Activated CD4-positive, alpha-beta T cell treated with anti-CD3 and anti-CD28 coated beads for 36 hours (primary cell): ENCODE measurements at regions of chr14 and their contacts with region 1.

Region 1: DNA sequence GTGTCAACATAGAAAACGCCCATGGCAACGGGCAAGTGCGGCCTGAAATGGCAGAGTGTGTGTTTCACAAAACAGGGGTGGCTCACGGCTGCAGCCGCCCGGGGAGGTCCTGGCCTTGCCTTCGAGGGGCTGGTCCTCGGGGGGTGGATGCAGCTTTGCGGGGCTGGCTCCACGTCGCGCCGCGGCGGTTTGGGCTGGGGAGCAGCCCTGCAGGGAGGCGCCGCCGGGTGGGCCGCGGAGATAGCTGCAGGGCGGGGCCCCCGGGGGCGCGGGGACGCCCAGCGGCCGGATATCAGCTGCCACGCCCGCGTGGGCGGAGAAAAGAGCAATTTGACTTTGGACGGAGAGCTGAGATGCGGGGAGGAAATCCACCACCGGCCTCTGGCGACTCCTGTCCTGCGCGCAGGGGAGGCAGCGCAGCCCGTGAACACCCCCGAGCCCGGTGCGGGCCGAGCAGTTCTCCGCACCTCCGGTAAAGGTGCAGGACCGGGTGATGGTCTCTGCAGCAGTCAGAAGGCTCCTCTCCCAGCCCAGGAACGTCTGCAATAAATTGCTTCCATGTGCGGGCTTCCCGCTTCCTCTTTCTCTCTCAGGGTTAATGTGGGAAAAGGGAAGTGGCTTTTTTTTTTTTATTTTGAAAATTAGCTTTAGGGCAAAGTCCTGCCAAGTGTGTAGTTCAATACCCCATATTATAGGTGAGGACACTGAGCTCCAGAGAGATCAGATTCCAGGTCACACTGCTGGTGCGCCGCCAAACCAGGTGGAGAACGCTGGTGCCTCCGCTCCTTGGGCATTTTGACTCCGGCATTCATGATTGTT is 110.5 kb downstream of the ARF6 start:
- DNase-seq: peak; percentile 90
- ATAC-seq: peak; percentile 2
- H3K4me3 Mint-ChIP-seq: peak overlapping the region; percentile 75
- H3K27ac Mint-ChIP-seq: peak overlapping the region; percentile 98
- H3K4me1 Mint-ChIP-seq: peaks cover 56% of the 10 kb centered on the region
- H3K27me3 Mint-ChIP-seq: no peaks in the 10 kb centered on the region

Region 2: GRCh38 chr14:49585803-49586672 is 417.4 kb before region 1 on chr14 and contains the start of gene RPS29:
- CTCF ChIA-PET with region 1: no interaction called
- POLR2A ChIA-PET with region 1: no interaction called
- intact Hi-C with region 1: no loop called
- DNase-seq: peak; percentile 99
- ATAC-seq: peak; percentile 84
- H3K4me3 Mint-ChIP-seq: peak within 1 kb of the TSS; percentile 92
- H3K27ac Mint-ChIP-seq: peak within 1 kb of the TSS; percentile 96
- H3K4me1 Mint-ChIP-seq: peaks cover 40% of the 10 kb centered on the region
- H3K27me3 Mint-ChIP-seq: no peaks in the 10 kb centered on the region
- total RNA-seq, gene RPS29: 481 to 1,987 TPM

Region 3: GRCh38 chr14:49620182-49621113 is 383.0 kb before region 1 on chr14 and contains the starts of genes MGAT2 and RPL36AL:
- CTCF ChIA-PET with region 1: no interaction called
- POLR2A ChIA-PET with region 1: interaction called, 4 read pairs
- intact Hi-C with region 1: loop called in 1 of 2 experiments (anchors 2 kb)
- DNase-seq: peak; percentile 97
- ATAC-seq: peak; percentile 90
- H3K4me3 Mint-ChIP-seq: peak within 1 kb of the TSS; percentile 93
- H3K27ac Mint-ChIP-seq: peak within 1 kb of the TSS; percentile 97
- H3K4me1 Mint-ChIP-seq: peaks cover 51% of the 10 kb centered on the region
- H3K27me3 Mint-ChIP-seq: no peaks in the 10 kb centered on the region
- total RNA-seq, gene MGAT2: 23.8 to 32.2 TPM
- total RNA-seq, gene RPL36AL: 272 to 309 TPM

Region 4: GRCh38 chr14:49828640-49829039 is 174.8 kb before region 1 on chr14:
- CTCF ChIA-PET with region 1: no interaction called
- POLR2A ChIA-PET with region 1: no interaction called
- intact Hi-C with region 1: no loop called
- DNase-seq: no peak
- ATAC-seq: no peak
- H3K4me3 Mint-ChIP-seq: no peak overlapping the region
- H3K27ac Mint-ChIP-seq: no peak overlapping the region
- H3K4me1 Mint-ChIP-seq: no peaks in the 10 kb centered on the region
- H3K27me3 Mint-ChIP-seq: no peaks in the 10 kb centered on the region

Region 5: GRCh38 chr14:49867831-49868723 is 135.3 kb before region 1 on chr14:
- CTCF ChIA-PET with region 1: interaction called, 43 read pairs
- POLR2A ChIA-PET with region 1: interaction called, 20 read pairs
- intact Hi-C with region 1: loop called (anchors 1 kb)
- DNase-seq: peak; percentile 100
- ATAC-seq: peak; percentile 87
- H3K4me3 Mint-ChIP-seq: peak overlapping the region; percentile 98
- H3K27ac Mint-ChIP-seq: peak overlapping the region; percentile 96
- H3K4me1 Mint-ChIP-seq: peaks cover 22% of the 10 kb centered on the region
- H3K27me3 Mint-ChIP-seq: no peaks in the 10 kb centered on the region

Region 6: GRCh38 chr14:49971156-49972130 is 32.0 kb before region 1 on chr14:
- CTCF ChIA-PET with region 1: interaction called, 14 read pairs
- POLR2A ChIA-PET with region 1: interaction called, 50 read pairs
- intact Hi-C with region 1: loop called (anchors 1 kb)
- DNase-seq: peak; percentile 77
- ATAC-seq: peak; percentile 66
- H3K4me3 Mint-ChIP-seq: peak overlapping the region; percentile 75
- H3K27ac Mint-ChIP-seq: peak overlapping the region; percentile 98
- H3K4me1 Mint-ChIP-seq: peaks cover 67% of the 10 kb centered on the region
- H3K27me3 Mint-ChIP-seq: no peaks in the 10 kb centered on the region

Region 7: GRCh38 chr14:50021261-50022031 is 18.0 kb after region 1 on chr14:
- CTCF ChIA-PET with region 1: interaction called, 6 read pairs
- POLR2A ChIA-PET with region 1: interaction called, 3 read pairs
- intact Hi-C with region 1: loop called in 1 of 2 experiments (anchors 1 kb)
- DNase-seq: peak; percentile 47
- ATAC-seq: peak; percentile 88
- H3K4me3 Mint-ChIP-seq: peak overlapping the region; percentile 25
- H3K27ac Mint-ChIP-seq: peak overlapping the region; percentile 72
- H3K4me1 Mint-ChIP-seq: peaks cover 41% of the 10 kb centered on the region
- H3K27me3 Mint-ChIP-seq: no peaks in the 10 kb centered on the region

Region 8: GRCh38 chr14:50085570-50086320 is 82.3 kb after region 1 on chr14:
- CTCF ChIA-PET with region 1: interaction called, 4 read pairs
- POLR2A ChIA-PET with region 1: interaction called, 47 read pairs
- intact Hi-C with region 1: loop called (anchors 1 kb)
- DNase-seq: peak; percentile 71
- ATAC-seq: peak; percentile 27
- H3K4me3 Mint-ChIP-seq: peak overlapping the region; percentile 45
- H3K27ac Mint-ChIP-seq: peak overlapping the region; percentile 94
- H3K4me1 Mint-ChIP-seq: peaks cover 94% of the 10 kb centered on the region
- H3K27me3 Mint-ChIP-seq: no peaks in the 10 kb centered on the region

Region 9: DNA sequence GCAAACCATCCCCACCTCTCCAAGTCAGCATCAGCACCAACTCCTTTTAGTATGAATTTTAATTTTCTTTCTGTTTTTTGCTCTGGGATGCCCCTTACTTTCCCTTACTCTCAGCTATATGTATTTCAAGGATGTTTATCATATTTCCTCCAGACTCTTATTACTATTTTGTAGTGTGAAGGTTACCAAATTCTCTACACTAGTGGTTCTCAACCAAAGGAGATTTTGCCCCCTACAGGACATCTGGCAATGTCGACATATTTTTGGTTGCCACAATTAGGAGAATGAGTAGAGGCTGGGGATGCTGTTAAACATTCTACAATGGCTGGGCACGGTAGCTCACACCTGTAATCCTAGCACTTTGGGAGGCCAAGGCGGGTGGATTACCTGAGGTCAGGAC is 257.1 kb after region 1 on chr14:
- CTCF ChIA-PET with region 1: no interaction called
- POLR2A ChIA-PET with region 1: no interaction called
- intact Hi-C with region 1: no loop called
- DNase-seq: peak; percentile 27
- ATAC-seq: peak; percentile 64
- H3K4me3 Mint-ChIP-seq: no peak overlapping the region
- H3K27ac Mint-ChIP-seq: no peak overlapping the region
- H3K4me1 Mint-ChIP-seq: no peaks in the 10 kb centered on the region
- H3K27me3 Mint-ChIP-seq: no peaks in the 10 kb centered on the region

Region 10: GRCh38 chr14:50520947-50521815 is 517.8 kb after region 1 on chr14:
- CTCF ChIA-PET with region 1: no interaction called
- POLR2A ChIA-PET with region 1: no interaction called
- intact Hi-C with region 1: loop called in 1 of 2 experiments (anchors 1 kb)
- DNase-seq: peak; percentile 84
- ATAC-seq: peak; percentile 81
- H3K4me3 Mint-ChIP-seq: peak overlapping the region; percentile 55
- H3K27ac Mint-ChIP-seq: peak overlapping the region; percentile 94
- H3K4me1 Mint-ChIP-seq: peaks cover 56% of the 10 kb centered on the region
- H3K27me3 Mint-ChIP-seq: no peaks in the 10 kb centered on the region